Posterior vena cava (tissue), 2 donors: ENCODE measurements at regions of chr12 and their contacts with region 1.

Region 1: GRCh38 chr12:24738441-24738840 is 210.5 kb downstream of the BCAT1 start:
- DNase-seq: no peak

Region 2: DNA sequence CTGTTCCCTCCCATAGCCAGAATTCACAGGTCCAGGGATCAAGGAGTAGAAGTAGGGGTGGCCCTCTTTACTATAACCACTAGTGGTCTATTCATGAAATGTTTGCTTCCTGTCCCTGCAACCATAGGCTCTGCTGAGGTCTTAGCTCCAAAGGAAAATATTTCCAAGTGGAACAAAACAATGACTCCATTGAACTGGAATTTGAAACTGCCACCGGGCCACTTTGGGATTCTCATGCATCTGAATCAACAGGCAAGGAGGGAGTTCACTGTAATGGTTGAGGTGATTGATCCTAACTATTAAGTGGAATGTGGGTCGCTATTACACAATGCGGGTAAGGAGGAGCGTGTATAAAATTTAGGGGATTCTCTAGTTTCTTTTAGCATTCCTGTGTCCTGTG is 1916.5 kb before region 1 on chr12:
- intact Hi-C with region 1: loop called in 1 of 2 experiments (anchors 5 kb)
- DNase-seq: no peak

Region 3: DNA sequence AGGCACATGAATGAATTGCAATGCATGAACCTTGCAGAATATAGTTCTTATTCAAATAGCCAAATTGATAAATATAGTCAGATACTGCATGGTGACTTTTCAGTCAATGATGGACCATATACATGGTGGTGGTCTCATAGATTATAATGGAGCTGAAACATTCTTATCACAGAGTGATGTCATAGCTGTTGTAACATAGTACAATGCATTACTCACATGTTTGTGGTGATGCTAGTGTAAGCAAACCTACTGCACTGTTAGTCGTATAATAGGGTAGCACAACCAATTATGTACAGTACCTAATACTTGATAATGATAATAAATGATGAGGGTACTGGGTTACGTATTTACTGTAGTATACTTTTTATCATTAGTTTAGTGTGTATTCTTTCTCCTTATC is 69.9 kb before region 1 on chr12:
- intact Hi-C with region 1: no loop called
- DNase-seq: no peak